Gastrocnemius medialis (tissue), 4 donors: ENCODE measurements at regions of chr2 and their contacts with region 1.

Region 1: DNA sequence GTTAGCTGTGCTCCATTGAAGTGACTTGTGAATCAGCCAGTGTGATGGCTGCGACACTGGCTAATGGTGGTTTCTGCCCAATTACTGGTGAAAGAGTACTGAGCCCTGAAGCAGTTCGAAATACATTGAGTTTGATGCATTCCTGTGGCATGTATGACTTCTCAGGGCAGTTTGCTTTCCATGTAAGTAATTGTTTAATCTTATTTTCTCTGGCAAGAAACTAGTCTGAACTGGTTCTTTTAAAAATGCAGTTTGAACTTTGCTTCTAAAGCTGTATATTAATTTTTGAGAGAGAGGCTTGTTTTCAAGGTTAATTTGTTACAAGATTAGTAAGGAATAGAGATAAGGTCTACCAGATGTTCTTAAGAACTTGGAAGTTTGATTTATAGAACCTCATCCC is 46.7 kb downstream of the GLS start:
- DNase-seq: no peak
- ATAC-seq: no peak
- H3K4me3 ChIP-seq: no peak overlapping the region
- H3K27ac ChIP-seq: no peak overlapping the region
- H3K4me1 ChIP-seq: no peaks in the 10 kb centered on the region
- H3K27me3 ChIP-seq: no peaks in the 10 kb centered on the region
- CTCF ChIP-seq: no peak
- POLR2A ChIP-seq: no peak

Region 2: DNA sequence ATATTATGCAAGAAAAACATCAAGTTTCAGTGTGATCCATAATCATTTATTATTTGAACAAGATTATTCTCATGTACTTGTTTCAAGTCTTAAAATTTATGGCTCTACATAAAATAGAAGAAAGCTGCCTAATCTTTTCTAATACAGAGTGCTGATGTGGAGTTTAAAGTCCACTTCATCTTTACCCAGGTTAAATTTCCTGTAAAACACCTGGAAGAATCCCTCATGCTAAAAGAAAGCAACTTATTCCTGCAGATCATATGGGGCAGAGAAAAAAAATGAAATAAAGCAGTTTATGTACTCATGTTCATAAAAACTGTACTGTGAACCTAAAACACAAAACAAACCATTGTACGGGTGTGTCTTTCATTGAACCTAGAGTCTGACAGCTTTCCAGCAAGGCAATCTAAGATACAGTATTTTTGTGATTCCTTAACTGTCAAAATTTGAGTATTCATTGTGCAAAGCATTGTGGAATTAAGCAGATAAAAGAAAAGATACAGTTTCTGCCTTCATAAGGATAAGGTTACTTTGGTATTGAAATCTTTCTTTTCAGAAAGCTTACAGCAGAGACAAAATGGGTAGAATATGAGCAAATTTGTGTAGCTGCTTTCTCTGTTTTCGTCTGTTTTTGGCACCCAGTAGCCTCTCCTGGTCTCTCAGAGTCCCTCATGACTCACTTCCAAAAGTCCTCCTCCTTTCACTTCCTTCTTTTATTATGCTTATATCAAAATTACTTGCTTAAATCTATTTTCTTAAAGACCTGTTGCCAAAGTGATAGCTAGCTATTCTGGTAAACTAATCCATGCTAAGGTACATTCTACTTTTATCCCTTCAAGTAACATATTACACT is 73.5 kb before region 1 on chr2:
- in situ Hi-C with region 1: no loop called
- intact Hi-C with region 1: loop called (anchors 10 kb)
- DNase-seq: no peak
- ATAC-seq: no peak
- H3K4me3 ChIP-seq: no peak overlapping the region
- H3K27ac ChIP-seq: no peak overlapping the region
- H3K4me1 ChIP-seq: peaks cover 0 to 3% of the 10 kb centered on the region in 2 donors
- H3K27me3 ChIP-seq: no peaks in the 10 kb centered on the region
- CTCF ChIP-seq: no peak
- POLR2A ChIP-seq: no peak